ENCODE measurements at regions of chr11 and their contacts with region 1.

Region 1: GRCh38 chr11:65779851-65780577 is 762 bp downstream of the AP5B1 start:
- DNase-seq: peak; percentile 91
- ATAC-seq: peak; percentile 85
- H3K4me3 Mint-ChIP-seq: peak overlapping the region; percentile 89
- H3K27ac Mint-ChIP-seq: peak overlapping the region; percentile 89
- H3K4me1 Mint-ChIP-seq: peaks cover 24% of the 10 kb centered on the region
- H3K27me3 Mint-ChIP-seq: peaks cover 5% of the 10 kb centered on the region
- CTCF ChIP-seq: peak; percentile 100

Region 2: DNA sequence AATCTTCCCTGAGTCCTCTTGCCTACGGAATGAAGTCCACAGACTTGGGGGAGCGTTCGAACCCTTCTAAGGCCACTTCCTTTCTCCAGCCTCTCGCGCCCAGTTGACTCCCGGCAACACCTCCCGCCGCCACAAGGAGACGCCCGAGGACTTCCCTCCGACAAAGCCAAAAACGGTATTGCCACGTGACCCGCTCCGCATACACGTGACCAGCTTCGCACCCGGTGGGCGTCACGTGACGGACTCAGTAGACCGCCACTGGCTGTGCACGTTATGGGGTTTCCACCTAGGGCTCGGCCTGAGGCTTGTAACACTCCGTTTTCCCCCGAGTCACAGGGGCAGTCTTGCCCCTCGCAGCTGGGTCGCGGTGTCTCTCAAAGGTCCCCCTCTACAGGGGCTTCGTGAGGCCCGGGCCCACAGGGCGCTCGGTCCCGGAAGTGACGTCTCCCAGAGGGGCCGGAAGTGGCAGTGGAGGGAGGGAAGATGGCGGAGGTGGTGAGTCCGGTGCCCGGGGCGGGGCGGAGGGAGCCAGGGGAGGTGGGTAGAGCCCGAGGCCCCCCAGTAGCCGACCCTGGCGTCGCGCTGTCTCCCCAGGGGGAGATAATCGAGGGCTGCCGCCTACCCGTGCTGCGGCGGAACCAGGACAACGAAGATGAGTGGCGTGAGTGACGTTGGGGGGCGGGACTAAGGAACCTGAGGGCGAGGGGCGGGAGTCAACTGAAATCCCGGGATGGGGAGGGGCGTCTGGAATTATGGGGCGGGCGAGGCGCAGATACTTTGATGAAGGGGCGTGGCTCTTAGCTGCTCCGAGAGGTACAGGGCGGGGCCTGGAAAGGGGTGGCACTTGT is 68.0 kb before region 1 on chr11 and contains the start of gene KAT5:
- CTCF ChIA-PET with region 1: interaction called, 33 read pairs
- POLR2A ChIA-PET with region 1: interaction called, 13 read pairs
- intact Hi-C with region 1: no loop called
- DNase-seq: peak; percentile 99
- ATAC-seq: peak; percentile 82
- H3K4me3 Mint-ChIP-seq: peak within 1 kb of the TSS; percentile 93
- H3K27ac Mint-ChIP-seq: peak within 1 kb of the TSS; percentile 98
- H3K4me1 Mint-ChIP-seq: peaks cover 20% of the 10 kb centered on the region
- H3K27me3 Mint-ChIP-seq: no peaks in the 10 kb centered on the region
- CTCF ChIP-seq: peak; percentile 93
- total RNA-seq, gene KAT5: 67.7 to 71.8 TPM

Region 3: DNA sequence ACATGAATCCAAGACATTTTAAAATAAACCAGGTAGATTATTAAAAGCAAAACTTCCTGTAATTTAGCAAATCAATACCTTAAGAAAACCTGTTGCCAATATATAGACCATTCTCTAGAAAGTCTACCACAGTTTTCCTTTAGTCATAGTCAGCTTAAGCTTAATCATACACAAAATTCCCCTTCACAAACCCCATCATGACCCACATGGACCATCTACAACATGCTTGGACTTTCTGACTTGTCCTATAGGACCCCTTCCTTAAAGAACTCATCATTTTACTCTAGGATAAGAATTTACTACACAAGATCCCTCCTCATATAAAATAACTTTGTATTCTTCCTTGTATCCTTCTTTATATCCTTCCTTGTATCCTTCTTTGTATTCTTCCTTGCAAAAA is 43.2 kb before region 1 on chr11:
- CTCF ChIA-PET with region 1: interaction called, 17 read pairs
- POLR2A ChIA-PET with region 1: no interaction called
- intact Hi-C with region 1: no loop called
- DNase-seq: no peak
- ATAC-seq: no peak
- H3K4me3 Mint-ChIP-seq: no peak overlapping the region
- H3K27ac Mint-ChIP-seq: no peak overlapping the region
- H3K4me1 Mint-ChIP-seq: no peaks in the 10 kb centered on the region
- H3K27me3 Mint-ChIP-seq: peaks cover 31% of the 10 kb centered on the region
- CTCF ChIP-seq: no peak

Region 4: GRCh38 chr11:65802841-65803240 is 22.8 kb after region 1 on chr11:
- CTCF ChIA-PET with region 1: interaction called, 55 read pairs
- POLR2A ChIA-PET with region 1: interaction called, 6 read pairs
- intact Hi-C with region 1: no loop called
- DNase-seq: no peak
- ATAC-seq: no peak
- H3K4me3 Mint-ChIP-seq: no peak overlapping the region
- H3K27ac Mint-ChIP-seq: no peak overlapping the region
- H3K4me1 Mint-ChIP-seq: peaks cover 3% of the 10 kb centered on the region
- H3K27me3 Mint-ChIP-seq: peaks cover 36% of the 10 kb centered on the region
- CTCF ChIP-seq: no peak

Region 5: DNA sequence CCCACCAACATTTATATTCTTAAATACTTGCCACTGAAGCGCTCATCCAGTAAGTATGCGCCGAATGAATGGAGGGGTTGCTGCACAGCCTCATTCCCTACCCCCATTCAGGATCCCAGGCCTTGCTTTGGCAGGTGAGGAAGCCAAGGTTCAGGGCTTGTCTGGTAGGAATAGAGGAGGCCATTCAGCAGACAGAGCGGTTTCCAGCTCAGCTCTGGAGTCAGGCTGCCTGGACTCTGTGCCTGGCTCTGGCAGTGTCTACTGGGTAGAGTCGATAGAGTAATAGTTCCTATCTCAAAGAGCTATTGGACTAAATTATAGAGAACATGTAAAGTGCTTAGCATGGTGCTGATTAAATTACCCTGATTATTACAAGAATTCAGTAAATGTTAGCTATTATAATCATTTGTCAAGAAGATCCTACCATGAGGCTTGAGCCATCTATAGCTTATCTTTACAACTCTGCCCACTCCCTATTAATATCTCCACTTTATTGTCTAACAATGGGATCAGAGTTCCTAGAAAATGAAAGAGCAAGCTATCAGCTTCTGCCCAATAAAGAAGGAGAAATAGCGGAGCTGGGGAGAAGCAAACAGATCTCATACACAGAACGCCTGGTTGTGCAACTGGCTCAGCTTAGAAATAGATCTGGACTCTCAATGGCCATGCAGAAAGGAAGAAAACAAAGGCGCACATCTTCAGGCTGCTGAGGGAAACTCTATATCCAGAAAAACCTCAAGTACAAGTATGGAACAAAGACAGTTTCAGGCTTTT is 47.1 kb after region 1 on chr11:
- CTCF ChIA-PET with region 1: interaction called, 235 read pairs
- POLR2A ChIA-PET with region 1: interaction called, 4 read pairs
- intact Hi-C with region 1: no loop called
- DNase-seq: no peak
- ATAC-seq: no peak
- H3K4me3 Mint-ChIP-seq: no peak overlapping the region
- H3K27ac Mint-ChIP-seq: no peak overlapping the region
- H3K4me1 Mint-ChIP-seq: peaks cover 28% of the 10 kb centered on the region
- H3K27me3 Mint-ChIP-seq: peaks cover 2% of the 10 kb centered on the region
- CTCF ChIP-seq: no peak

Region 6: DNA sequence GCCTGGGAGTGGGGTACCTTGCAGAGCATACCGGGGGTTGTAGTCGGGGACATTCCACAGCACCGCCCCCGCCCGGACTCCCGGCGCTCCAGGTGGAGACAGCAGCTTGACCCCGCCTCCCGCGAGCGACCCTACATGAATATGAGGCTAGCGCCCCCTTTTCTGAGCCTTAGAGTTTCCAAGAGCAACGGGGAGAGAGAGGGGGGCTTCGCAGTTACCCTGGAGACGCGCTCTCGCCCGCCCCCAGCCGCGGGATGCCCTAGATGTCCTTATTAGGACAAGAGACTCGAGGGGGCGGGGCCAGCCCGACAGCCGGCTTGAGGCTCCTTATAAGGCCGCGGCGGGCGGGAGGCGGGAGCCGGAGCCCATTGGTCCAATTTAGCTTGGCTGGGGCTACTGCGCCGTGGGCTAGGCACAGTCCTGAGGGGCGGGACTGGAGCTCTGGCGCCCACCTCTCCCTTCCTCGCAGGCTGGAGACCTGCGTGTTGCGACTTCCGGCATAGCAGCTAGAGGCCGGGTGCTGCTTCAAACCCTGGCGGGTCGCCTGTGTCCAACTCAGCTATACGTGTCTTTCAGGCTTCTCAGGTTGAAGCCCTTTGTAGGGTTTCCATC is 79.3 kb after region 1 on chr11:
- CTCF ChIA-PET with region 1: interaction called, 14 read pairs
- POLR2A ChIA-PET with region 1: no interaction called
- intact Hi-C with region 1: no loop called
- DNase-seq: peak; percentile 100
- ATAC-seq: peak; percentile 72
- H3K4me3 Mint-ChIP-seq: peak overlapping the region; percentile 90
- H3K27ac Mint-ChIP-seq: peak overlapping the region; percentile 99
- H3K4me1 Mint-ChIP-seq: peaks cover 37% of the 10 kb centered on the region
- H3K27me3 Mint-ChIP-seq: no peaks in the 10 kb centered on the region
- CTCF ChIP-seq: no peak